Calu3 (cell line): ENCODE measurements at regions of chr14 and their contacts with region 1.

Region 1: GRCh38 chr14:75293920-75294642 is 15.5 kb downstream of the FOS start:
- DNase-seq: peak; percentile 96
- H3K4me3 Mint-ChIP-seq: peak overlapping the region; percentile 60
- H3K27ac Mint-ChIP-seq: peak overlapping the region; percentile 97
- H3K4me1 Mint-ChIP-seq: peaks cover 21% of the 10 kb centered on the region
- H3K27me3 Mint-ChIP-seq: no peaks in the 10 kb centered on the region
- CTCF ChIP-seq: no peak

Region 2: GRCh38 chr14:74514471-74514941 is 779.6 kb before region 1 on chr14:
- CTCF ChIA-PET with region 1: no interaction called
- intact Hi-C with region 1: no loop called
- DNase-seq: peak; percentile 58
- H3K4me3 Mint-ChIP-seq: peak overlapping the region; percentile 15
- H3K27ac Mint-ChIP-seq: no peak overlapping the region
- H3K4me1 Mint-ChIP-seq: no peaks in the 10 kb centered on the region
- H3K27me3 Mint-ChIP-seq: peaks cover 13% of the 10 kb centered on the region
- CTCF ChIP-seq: no peak

Region 3: GRCh38 chr14:75084513-75084912 is 209.6 kb before region 1 on chr14:
- CTCF ChIA-PET with region 1: no interaction called
- intact Hi-C with region 1: no loop called
- DNase-seq: no peak
- H3K4me3 Mint-ChIP-seq: no peak overlapping the region
- H3K27ac Mint-ChIP-seq: no peak overlapping the region
- H3K4me1 Mint-ChIP-seq: no peaks in the 10 kb centered on the region
- H3K27me3 Mint-ChIP-seq: no peaks in the 10 kb centered on the region
- CTCF ChIP-seq: peak; percentile 15

Region 4: DNA sequence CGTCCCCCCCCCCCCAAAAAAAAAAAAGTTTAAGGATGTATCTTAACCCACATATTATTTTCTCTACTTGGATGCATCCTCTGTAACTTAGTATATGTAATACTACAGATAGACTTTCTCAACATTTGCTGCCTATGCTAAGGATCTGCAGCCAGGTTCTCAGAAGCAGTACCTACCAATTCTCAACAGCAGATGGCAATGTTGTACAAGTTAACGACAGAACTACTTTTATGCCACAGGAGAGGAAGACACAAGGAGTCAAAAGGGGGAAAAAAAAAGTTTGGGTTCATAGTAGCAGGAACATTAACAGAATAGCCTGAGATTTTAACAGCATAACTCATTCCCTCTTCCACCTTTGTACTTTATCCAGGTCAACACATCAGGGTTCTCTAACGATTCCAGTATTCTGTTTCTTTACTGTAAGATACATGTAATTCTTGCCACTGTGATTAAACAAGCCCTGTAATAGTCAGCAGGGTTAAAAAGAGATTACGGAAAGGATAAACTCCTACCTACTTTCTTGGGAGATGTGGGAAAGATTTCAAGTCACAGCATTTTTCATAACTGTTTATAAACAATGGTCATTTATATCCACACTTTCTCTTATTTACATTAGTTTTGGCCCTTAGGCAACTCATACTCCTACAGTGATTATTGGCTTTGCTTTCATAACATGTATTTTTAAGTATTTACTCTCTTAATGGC is 161.5 kb before region 1 on chr14:
- CTCF ChIA-PET with region 1: interaction called, 3 read pairs
- intact Hi-C with region 1: loop called (anchors 1 kb)
- DNase-seq: peak; percentile 65
- H3K4me3 Mint-ChIP-seq: no peak overlapping the region
- H3K27ac Mint-ChIP-seq: peak overlapping the region; percentile 72
- H3K4me1 Mint-ChIP-seq: peaks cover 16% of the 10 kb centered on the region
- H3K27me3 Mint-ChIP-seq: no peaks in the 10 kb centered on the region
- CTCF ChIP-seq: peak; percentile 56

Region 5: DNA sequence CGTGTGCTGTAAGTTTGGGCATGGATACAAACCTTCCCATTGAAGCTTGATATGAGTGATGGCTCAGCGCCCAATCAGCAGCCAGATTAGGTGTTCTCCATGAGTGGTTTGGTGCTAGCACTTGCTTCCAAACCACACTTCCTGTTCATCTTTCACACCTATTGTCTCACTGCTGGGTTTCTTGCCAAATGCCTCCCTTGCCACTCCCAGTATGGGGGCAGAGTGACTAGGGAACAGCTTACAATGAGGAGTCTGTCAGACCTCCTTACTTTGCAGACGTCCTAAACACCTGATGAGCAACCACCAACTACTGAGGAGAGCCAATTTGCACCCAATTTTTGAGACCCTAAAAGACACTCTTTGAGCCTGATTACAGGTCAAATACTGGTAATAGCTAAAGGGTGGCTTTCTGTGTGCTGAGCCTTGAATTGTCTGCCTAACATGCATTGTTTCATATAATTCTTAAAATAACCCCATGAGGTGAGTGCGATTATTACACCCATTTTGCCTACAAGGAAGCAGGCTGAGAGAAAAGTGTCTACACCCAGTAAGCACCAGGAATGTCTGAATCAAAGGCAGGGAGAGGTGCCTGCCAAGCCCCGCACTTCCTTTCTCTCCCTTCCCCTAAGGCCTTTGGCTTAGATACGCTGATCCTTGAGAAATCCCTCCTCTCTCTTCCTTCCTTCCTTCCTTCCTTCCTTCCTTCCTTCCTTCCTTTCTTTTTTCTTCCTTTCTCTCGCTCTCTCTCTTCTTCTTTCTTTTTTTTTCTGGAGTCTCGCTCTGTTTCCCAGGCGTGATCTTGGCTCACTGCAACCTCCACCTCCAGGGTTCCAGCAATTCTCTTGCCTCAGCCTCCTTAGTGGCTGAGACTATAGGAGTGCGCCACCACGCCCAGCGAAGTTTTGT is 63.7 kb before region 1 on chr14:
- CTCF ChIA-PET with region 1: interaction called, 3 read pairs
- intact Hi-C with region 1: loop called (anchors 5 kb)
- DNase-seq: peak; percentile 68
- H3K4me3 Mint-ChIP-seq: no peak overlapping the region
- H3K27ac Mint-ChIP-seq: peak overlapping the region; percentile 96
- H3K4me1 Mint-ChIP-seq: peaks cover 65% of the 10 kb centered on the region
- H3K27me3 Mint-ChIP-seq: no peaks in the 10 kb centered on the region
- CTCF ChIP-seq: peak; percentile 33

Region 6: DNA sequence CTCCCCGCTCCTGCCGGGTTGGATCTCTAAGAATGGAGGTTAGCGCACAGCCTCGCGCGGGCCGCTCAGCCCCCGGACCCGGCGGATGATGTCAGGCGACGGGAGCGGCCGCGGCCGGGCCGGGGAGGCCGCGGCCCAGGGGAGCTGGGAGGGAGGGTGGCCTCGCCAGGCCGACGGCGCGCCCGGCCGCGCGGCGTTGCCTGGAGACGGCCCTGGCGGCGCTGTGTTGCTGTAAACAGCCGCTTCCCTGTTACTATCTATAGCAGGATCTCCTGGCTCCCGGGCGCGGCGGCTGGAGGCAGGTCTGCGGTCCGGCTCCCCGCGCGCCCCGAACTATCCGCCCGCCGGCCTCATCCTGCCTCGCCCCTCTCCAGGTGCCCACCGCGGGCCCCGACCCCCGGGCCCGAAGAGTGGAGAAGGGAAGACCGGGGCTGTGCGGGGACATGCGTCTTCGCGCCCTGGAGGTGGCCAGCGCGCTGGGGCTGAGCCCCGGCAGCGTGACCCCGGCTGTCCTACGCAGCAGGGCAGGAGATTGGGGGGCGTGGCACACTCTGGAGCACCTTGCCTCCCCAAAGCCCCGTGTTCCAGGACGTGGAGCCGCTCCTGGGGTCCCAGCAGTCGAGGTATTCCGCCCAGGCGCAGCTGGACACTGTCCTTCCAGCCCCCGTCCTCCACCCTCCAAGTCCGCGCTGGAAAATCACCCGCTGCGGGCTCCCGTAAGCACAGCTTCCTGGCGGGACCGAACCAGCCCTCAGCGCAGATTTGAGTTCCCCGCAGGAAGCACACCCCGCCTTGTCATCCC is 16.9 kb before region 1 on chr14:
- CTCF ChIA-PET with region 1: interaction called, 10 read pairs
- intact Hi-C with region 1: no loop called
- DNase-seq: peak; percentile 89
- H3K4me3 Mint-ChIP-seq: peak overlapping the region; percentile 94
- H3K27ac Mint-ChIP-seq: peak overlapping the region; percentile 98
- H3K4me1 Mint-ChIP-seq: peaks cover 12% of the 10 kb centered on the region
- H3K27me3 Mint-ChIP-seq: no peaks in the 10 kb centered on the region
- CTCF ChIP-seq: no peak

Region 7: GRCh38 chr14:75283162-75283881 is 10.8 kb before region 1 on chr14:
- CTCF ChIA-PET with region 1: interaction called, 10 read pairs
- intact Hi-C with region 1: no loop called
- DNase-seq: peak; percentile 41
- H3K4me3 Mint-ChIP-seq: peak overlapping the region; percentile 94
- H3K27ac Mint-ChIP-seq: peak overlapping the region; percentile 98
- H3K4me1 Mint-ChIP-seq: peaks cover 35% of the 10 kb centered on the region
- H3K27me3 Mint-ChIP-seq: no peaks in the 10 kb centered on the region
- CTCF ChIP-seq: no peak